Activated CD4-positive, alpha-beta memory T cell treated with anti-CD3 and anti-CD28 coated beads for 36 hours (primary cell): ENCODE measurements at regions of chrX and their contacts with region 1.

Region 1: GRCh38 chrX:56382278-56382677 is 150.1 kb downstream of the KLF8 start:
- DNase-seq: peak; percentile 55
- H3K4me3 Mint-ChIP-seq: peak overlapping the region; percentile 24
- H3K27ac Mint-ChIP-seq: peak overlapping the region; percentile 86
- H3K4me1 Mint-ChIP-seq: peaks cover 43% of the 10 kb centered on the region
- H3K27me3 Mint-ChIP-seq: no peaks in the 10 kb centered on the region

Region 2: GRCh38 chrX:56281789-56282188 is 100.5 kb before region 1 on chrX:
- CTCF ChIA-PET with region 1: interaction called, 5 read pairs
- POLR2A ChIA-PET with region 1: no interaction called
- intact Hi-C with region 1: loop called (anchors 10 kb)
- DNase-seq: no peak
- H3K4me3 Mint-ChIP-seq: no peak overlapping the region
- H3K27ac Mint-ChIP-seq: no peak overlapping the region
- H3K4me1 Mint-ChIP-seq: peaks cover 9% of the 10 kb centered on the region
- H3K27me3 Mint-ChIP-seq: no peaks in the 10 kb centered on the region

Region 3: DNA sequence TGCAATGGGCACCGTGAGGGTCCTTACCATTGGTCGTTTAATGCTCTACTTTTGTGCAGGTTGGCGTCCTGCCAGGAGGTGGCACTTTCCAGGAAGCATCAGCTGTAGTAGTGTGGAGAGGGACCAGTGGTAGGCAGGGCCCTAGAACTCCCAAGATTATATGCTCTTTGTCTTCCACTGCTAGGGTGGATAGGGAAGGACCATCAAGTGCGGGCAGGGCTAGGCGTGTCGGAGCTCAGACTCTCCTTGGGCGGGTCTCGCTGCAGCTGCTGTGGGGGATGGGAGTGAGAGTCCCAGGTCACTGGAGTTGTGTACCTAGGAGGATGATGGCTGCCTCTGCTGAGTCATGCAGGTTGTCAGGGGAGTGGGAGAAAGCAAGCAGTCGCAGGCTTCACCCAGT is 15.4 kb before region 1 on chrX:
- CTCF ChIA-PET with region 1: no interaction called
- POLR2A ChIA-PET with region 1: no interaction called
- intact Hi-C with region 1: loop called (anchors 2 kb)
- DNase-seq: peak; percentile 27
- H3K4me3 Mint-ChIP-seq: no peak overlapping the region
- H3K27ac Mint-ChIP-seq: peak overlapping the region; percentile 38
- H3K4me1 Mint-ChIP-seq: peaks cover 57% of the 10 kb centered on the region
- H3K27me3 Mint-ChIP-seq: no peaks in the 10 kb centered on the region

Region 4: DNA sequence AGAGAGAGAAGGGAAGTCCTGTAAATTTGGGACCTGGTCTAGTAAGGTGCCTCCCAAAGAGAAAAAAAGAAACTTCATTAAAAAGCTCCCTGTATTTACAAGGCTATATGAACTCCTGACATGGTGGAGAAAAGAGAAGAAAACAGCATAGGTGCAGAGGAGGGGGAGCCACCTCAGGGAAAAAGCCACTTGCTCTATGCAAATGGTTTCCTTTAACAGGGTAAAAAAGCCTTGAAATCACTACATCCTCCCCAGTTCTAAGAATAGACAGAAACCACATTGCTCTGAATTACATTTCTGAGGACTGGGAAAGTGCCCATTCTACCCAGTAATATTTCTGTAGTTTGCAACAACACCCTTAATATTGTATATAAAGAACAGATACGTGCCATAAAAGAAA is 15.4 kb after region 1 on chrX:
- CTCF ChIA-PET with region 1: no interaction called
- POLR2A ChIA-PET with region 1: no interaction called
- intact Hi-C with region 1: loop called (anchors 2 kb)
- DNase-seq: peak; percentile 46
- H3K4me3 Mint-ChIP-seq: peak overlapping the region; percentile 45
- H3K27ac Mint-ChIP-seq: peak overlapping the region; percentile 85
- H3K4me1 Mint-ChIP-seq: peaks cover 58% of the 10 kb centered on the region
- H3K27me3 Mint-ChIP-seq: no peaks in the 10 kb centered on the region

Region 5: GRCh38 chrX:56744996-56745395 is 362.7 kb after region 1 on chrX:
- CTCF ChIA-PET with region 1: no interaction called
- POLR2A ChIA-PET with region 1: no interaction called
- intact Hi-C with region 1: no loop called
- DNase-seq: no peak
- H3K4me3 Mint-ChIP-seq: no peak overlapping the region
- H3K27ac Mint-ChIP-seq: no peak overlapping the region
- H3K4me1 Mint-ChIP-seq: peaks cover 40% of the 10 kb centered on the region
- H3K27me3 Mint-ChIP-seq: no peaks in the 10 kb centered on the region

Region 6: GRCh38 chrX:56833626-56834025 is 451.3 kb after region 1 on chrX:
- CTCF ChIA-PET with region 1: no interaction called
- POLR2A ChIA-PET with region 1: no interaction called
- intact Hi-C with region 1: no loop called
- DNase-seq: no peak
- H3K4me3 Mint-ChIP-seq: no peak overlapping the region
- H3K27ac Mint-ChIP-seq: no peak overlapping the region
- H3K4me1 Mint-ChIP-seq: no peaks in the 10 kb centered on the region
- H3K27me3 Mint-ChIP-seq: no peaks in the 10 kb centered on the region

Region 7: DNA sequence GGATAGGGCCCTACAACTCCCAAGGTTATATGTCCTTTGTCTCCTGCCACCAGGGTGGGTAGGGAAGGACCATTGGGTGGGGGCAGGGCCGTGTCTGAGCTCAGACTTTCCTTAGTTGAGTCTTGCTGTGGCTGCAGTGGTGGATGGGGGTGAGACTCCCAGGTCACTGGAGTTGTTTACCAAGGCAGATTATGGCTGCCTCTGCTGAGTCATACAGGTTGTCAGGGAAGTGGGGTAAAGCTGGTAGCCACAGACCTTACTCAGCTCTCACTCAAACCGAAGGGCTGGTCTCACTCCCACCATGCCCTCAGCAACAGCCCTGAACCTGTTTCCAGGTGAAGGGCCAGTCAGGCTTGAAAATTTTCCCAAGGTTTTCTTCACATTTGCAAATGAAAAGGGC is 845.4 kb after region 1 on chrX:
- CTCF ChIA-PET with region 1: no interaction called
- POLR2A ChIA-PET with region 1: no interaction called
- intact Hi-C with region 1: no loop called
- DNase-seq: peak; percentile 53
- H3K4me3 Mint-ChIP-seq: no peak overlapping the region
- H3K27ac Mint-ChIP-seq: no peak overlapping the region
- H3K4me1 Mint-ChIP-seq: no peaks in the 10 kb centered on the region
- H3K27me3 Mint-ChIP-seq: no peaks in the 10 kb centered on the region